ENCODE measurements at regions of chr1 and their contacts with region 1.

Region 1: DNA sequence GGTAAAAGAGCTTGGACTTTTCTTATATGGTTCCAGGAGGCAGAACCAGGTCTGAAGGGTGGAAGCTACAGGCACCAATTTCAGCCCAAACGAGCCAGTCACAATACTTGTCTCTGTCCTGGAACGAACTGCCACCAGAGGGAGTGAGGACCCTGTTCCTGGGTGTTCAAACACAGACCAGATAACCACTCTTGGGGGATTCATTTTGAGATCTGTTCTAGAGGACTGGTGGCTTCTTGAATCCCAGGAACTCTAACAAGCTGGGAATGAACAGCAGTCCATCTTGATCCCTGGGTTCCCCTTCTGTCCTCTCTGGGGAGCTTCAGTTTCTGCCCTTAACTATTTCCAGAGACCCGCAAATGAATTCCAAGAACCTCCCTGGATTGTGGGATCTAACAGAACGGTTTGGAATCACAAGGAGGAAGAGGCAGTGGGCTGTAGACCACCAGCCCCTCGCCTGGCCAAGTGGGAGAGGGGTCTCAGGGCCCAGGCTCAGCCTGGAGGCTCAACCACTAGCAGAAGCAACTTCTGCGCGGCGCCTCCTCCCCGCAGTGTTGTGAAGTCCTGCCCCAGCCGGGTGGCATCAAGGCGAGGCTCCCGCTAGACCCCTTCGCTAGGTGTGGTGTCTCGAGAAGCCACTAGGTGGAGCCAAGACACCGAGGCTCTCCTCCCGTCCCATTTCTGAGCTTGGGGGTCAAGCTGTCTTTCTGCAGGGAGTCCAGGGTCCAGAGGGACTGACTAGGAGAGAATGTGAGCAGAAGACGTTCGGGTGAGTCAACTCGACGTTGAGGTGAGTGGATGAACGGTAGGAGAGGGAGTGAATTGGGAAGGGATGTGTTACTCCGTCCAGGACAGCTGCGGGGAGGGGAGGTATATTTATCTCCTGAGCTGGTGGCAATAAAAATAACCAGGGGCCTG is 12.1 kb upstream of the NES start:
- DNase-seq: peak; percentile 54 to 77
- ATAC-seq: peak; percentile 81

Region 2: GRCh38 chr1:156728597-156729462 is 39.5 kb after region 1 on chr1 and contains the start of gene ISG20L2:
- intact Hi-C with region 1: loop called (anchors 5 kb)
- DNase-seq: peak; percentile 97 to 99
- ATAC-seq: peak; percentile 90
- total RNA-seq, gene ISG20L2: 24.2 to 28.3 TPM

Region 3: DNA sequence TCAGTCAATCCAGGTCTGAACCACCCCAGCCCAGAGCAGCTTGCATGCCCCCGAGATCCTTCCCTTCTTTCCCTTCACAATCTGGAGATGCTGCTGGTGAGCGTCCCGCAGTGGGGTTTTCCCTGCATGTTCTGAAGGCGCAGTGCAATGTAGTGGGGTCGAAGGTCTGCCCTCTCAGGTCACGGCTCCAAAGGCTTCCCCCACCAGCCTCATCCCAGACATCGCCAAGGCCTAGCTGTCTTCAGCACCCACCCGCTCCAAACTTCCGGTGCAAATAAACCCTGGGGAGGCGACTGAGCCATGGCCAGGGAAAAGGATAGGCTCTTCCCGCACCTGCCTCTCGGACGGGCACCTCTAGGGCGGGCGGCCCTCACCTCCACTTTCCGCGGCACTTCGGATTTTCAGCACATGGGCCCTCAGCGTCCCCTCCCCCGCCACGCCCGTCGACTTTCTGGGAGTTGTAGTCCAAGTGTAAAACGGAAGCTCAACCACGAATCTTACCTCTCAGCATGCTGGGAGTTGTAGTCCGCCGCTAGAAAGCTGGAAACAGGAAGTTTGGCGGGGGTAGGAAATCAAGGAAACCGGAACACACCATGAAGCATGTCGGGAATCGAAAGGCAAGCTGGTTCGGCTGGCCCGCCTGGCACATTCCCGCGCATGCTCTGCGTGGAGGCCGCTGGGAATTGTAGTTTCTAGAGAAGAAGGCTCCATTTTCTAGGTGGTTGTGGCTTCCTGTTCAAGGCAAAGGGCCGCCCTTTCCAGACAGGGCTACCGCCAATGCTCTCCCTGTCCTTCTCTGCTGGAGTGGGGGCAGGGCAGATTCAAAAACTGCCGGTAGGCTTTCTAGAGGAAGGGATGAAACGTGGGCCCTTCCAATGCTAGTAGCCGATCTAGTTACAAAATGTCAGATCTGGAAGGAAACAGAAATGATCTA is 51.7 kb after region 1 on chr1 and contains the start of gene MRPL24:
- intact Hi-C with region 1: no loop called
- DNase-seq: peak; percentile 97 to 99
- ATAC-seq: peak; percentile 90
- total RNA-seq, gene MRPL24: 37.7 to 60.2 TPM

Measured in left colon (tissue), 2 donors.